Uterus (tissue), 4 donors: ENCODE measurements at regions of chr5 and their contacts with region 1.

Region 1: DNA sequence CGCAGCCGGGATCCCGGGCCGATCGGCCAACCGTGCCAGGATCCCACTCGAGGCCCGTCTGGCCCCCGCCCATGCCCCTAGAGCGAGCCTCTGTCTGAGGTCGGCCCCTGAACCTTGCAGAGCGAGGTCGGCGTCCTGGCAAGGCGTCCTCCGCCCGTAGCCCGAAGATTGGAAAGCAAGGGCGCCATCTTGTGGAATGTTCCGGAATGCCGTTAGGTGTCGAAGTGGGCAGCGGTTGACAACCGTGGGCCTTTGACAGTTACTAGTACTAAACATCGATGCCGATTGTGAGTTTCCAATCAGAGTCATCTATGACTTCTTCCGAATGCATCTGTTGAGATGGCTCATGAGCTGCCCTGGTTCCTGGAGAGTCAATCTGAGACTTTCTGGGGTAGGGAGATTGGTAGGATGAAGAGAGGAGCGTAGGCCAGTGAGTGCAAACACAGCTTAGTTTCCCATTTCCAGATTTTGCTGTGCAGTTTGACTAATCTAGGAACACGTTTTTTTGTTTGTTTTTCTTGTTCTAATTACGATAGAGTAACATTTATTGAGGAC is 923 bp upstream of the PLK2 start:
- DNase-seq: peak; percentile 89 to 91
- H3K4me3 ChIP-seq: peak overlapping the region; percentile 68 to 82
- H3K27ac ChIP-seq: peak overlapping the region; percentile 94 to 95
- H3K4me1 ChIP-seq: no peaks in the 10 kb centered on the region
- H3K27me3 ChIP-seq: no peaks in the 10 kb centered on the region
- CTCF ChIP-seq: peak; percentile 76 to 88 (median 80)
- POLR2A ChIP-seq: peak in 1 of 2 donors; percentile 17

Region 2: DNA sequence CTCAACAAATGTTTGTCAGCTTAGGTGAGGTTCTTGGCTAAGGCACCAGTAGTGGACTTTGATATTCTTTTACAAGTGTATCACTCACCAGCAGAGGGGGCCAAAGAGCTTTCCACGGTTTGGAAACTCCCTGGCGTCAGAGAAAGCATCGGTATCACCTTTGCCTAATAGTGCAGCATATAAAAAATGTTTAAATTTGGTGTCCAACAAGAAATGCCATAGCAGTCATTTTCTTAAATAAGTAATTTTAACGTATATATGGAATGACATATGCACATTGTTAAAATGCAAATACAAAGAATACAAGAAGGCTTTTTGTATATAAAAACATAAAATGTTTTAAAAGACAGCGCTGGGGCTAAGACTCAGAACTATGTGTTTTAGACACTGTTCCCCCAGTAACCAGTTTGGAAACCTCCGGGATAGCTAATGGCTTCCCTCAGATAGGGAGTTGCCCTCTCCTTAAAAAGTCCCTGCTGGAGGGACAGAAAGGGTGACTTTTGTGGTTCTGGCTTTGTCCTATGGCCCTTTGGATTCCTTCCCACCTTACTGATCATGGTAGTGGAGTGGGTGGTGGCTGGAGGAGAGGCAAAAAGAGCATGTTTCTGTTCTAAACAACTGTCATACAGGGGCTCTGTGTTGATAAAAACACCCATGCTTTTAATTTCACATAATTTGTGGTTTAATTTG is 1162.4 kb before region 1 on chr5:
- intact Hi-C with region 1: loop called (anchors 10 kb)
- DNase-seq: peak; percentile 79 to 88
- H3K4me3 ChIP-seq: no peak overlapping the region
- H3K27ac ChIP-seq: peak overlapping the region; percentile 26 to 33
- H3K4me1 ChIP-seq: peaks cover 0 to 7% of the 10 kb centered on the region in 2 donors
- H3K27me3 ChIP-seq: no peaks in the 10 kb centered on the region
- CTCF ChIP-seq: peak; percentile 73 to 83 (median 81)
- POLR2A ChIP-seq: no peak

Region 3: GRCh38 chr5:57779383-57780223 is 681.2 kb before region 1 on chr5:
- intact Hi-C with region 1: loop called (anchors 2 kb)
- DNase-seq: peak; percentile 18 to 29
- H3K4me3 ChIP-seq: no peak overlapping the region
- H3K27ac ChIP-seq: peak overlapping the region in 1 of 2 donors; percentile 22
- H3K4me1 ChIP-seq: no peaks in the 10 kb centered on the region
- H3K27me3 ChIP-seq: no peaks in the 10 kb centered on the region
- CTCF ChIP-seq: peak; percentile 47 to 73 (median 64)
- POLR2A ChIP-seq: no peak

Region 4: GRCh38 chr5:58394339-58394738 is 66.5 kb before region 1 on chr5:
- intact Hi-C with region 1: no loop called
- DNase-seq: no peak
- H3K4me3 ChIP-seq: no peak overlapping the region
- H3K27ac ChIP-seq: no peak overlapping the region
- H3K4me1 ChIP-seq: no peaks in the 10 kb centered on the region
- H3K27me3 ChIP-seq: no peaks in the 10 kb centered on the region
- CTCF ChIP-seq: no peak
- POLR2A ChIP-seq: no peak